Activated T-helper 1 cell treated with anti-CD3 and anti-CD28 coated beads, Interleukin-12 subunit alpha, Interleukin-12 subunit beta, Interleukin-2, Interleukin-4 antibody, amounts not matched to agents 30 ng/mL and 10 ng/mL and 1 ng/mL, durations not matched to agents 14 hours and 24 hours and 36 hours (primary cell): ENCODE measurements at regions of chr12 and their contacts with region 1.

Region 1: GRCh38 chr12:53295070-53295890 is at the start of gene PFDN5:
- DNase-seq: peak; percentile 86
- H3K4me3 Mint-ChIP-seq: peak within 1 kb of the TSS; percentile 99
- H3K27ac Mint-ChIP-seq: peak within 1 kb of the TSS; percentile 91
- H3K4me1 Mint-ChIP-seq: peaks cover 50% of the 10 kb centered on the region
- H3K27me3 Mint-ChIP-seq: no peaks in the 10 kb centered on the region
- total RNA-seq, gene PFDN5: 344 and 350 TPM in 2 replicates

Region 2: GRCh38 chr12:53205747-53206419 is 89.4 kb before region 1 on chr12:
- intact Hi-C with region 1: loop called (anchors 1 kb)
- DNase-seq: peak; percentile 74
- H3K4me3 Mint-ChIP-seq: peak overlapping the region; percentile 82
- H3K27ac Mint-ChIP-seq: peak overlapping the region; percentile 90
- H3K4me1 Mint-ChIP-seq: peaks cover 67% of the 10 kb centered on the region
- H3K27me3 Mint-ChIP-seq: no peaks in the 10 kb centered on the region

Region 3: DNA sequence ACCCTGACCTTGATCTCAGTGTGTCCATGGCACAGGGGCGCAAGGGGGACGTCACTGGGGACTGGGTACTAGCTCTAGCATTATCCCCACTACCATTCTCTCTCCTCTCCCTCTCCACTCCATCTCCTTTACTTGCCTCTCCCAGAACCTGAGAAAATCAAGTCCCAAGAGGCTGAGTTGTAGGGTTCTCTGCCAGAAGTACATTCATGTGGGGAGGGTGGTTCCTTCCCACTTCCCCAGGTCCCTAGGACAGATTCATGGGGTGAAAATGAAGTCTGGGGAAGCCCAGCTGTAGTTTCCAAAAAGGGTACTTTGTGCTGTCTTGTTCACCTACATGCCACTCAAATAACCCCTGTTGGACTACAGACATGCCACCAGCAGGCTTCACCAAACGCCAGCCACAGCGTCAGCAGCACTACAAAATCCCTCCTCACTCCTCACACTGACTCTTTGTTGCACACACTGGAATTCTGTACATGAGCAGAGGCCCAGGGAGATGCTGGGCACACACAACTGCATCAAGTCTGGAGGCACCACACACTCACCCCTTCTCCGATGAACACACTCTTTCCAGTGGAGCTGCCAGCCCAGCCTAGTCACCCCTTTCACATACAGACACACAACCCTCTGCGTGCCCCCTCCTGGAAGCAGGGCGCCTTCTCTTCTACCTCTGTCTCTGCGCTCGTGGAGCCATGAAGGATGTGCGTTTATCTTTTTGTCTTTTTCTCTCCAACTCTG is 70.2 kb before region 1 on chr12:
- intact Hi-C with region 1: no loop called
- DNase-seq: no peak
- H3K4me3 Mint-ChIP-seq: peak overlapping the region; percentile 25
- H3K27ac Mint-ChIP-seq: peak overlapping the region; percentile 40
- H3K4me1 Mint-ChIP-seq: peaks cover 78% of the 10 kb centered on the region
- H3K27me3 Mint-ChIP-seq: peaks cover 2% of the 10 kb centered on the region

Region 4: DNA sequence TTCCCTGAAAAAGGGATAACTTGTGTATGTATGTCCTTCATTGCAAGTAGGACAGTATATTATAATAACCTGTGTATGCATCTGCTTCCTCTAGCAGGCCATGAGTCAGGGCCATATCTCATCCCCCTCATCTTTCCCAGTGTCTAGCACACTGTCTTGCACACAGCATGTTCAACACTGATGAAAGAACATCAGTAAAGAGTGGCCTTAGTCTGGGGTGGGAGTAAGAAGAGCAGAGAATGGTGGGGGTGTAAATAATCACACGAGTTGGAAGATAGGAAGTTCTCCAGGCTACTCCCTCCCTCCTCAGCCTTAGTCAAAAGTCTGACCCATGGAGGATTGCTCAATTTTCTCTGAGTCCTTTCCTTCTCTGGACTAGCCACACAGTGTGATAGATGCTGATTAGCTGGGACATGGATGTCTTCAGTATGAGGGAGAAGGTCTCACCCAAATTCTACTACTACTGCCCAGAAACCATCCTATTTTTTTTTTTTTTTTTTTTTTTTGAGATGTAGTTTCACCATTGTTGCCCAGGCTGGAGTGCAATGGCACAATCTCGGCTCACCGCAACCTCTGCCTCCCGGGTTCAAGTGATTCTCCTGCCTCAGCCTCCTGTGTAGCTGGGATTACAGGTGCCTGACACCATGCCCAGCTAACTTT is 70.1 kb after region 1 on chr12:
- intact Hi-C with region 1: no loop called
- DNase-seq: no peak
- H3K4me3 Mint-ChIP-seq: no peak overlapping the region
- H3K27ac Mint-ChIP-seq: peak overlapping the region; percentile 26
- H3K4me1 Mint-ChIP-seq: peaks cover 6% of the 10 kb centered on the region
- H3K27me3 Mint-ChIP-seq: no peaks in the 10 kb centered on the region

Region 5: GRCh38 chr12:53500776-53501614 is 205.7 kb after region 1 on chr12 and contains the start of gene TARBP2:
- intact Hi-C with region 1: loop called (anchors 1 kb)
- DNase-seq: peak; percentile 93
- H3K4me3 Mint-ChIP-seq: peak within 1 kb of the TSS; percentile 95
- H3K27ac Mint-ChIP-seq: peak within 1 kb of the TSS; percentile 98
- H3K4me1 Mint-ChIP-seq: peaks cover 53% of the 10 kb centered on the region
- H3K27me3 Mint-ChIP-seq: peaks cover 2% of the 10 kb centered on the region
- total RNA-seq, gene TARBP2: 47.7 and 48.2 TPM in 2 replicates

Region 6: GRCh38 chr12:53513712-53514410 is 218.6 kb after region 1 on chr12:
- intact Hi-C with region 1: no loop called
- DNase-seq: no peak
- H3K4me3 Mint-ChIP-seq: no peak overlapping the region
- H3K27ac Mint-ChIP-seq: no peak overlapping the region
- H3K4me1 Mint-ChIP-seq: peaks cover 4% of the 10 kb centered on the region
- H3K27me3 Mint-ChIP-seq: no peaks in the 10 kb centered on the region